Heart right ventricle (tissue), 16 donors: ENCODE measurements at regions of chr16 and their contacts with region 1.

Region 1: DNA sequence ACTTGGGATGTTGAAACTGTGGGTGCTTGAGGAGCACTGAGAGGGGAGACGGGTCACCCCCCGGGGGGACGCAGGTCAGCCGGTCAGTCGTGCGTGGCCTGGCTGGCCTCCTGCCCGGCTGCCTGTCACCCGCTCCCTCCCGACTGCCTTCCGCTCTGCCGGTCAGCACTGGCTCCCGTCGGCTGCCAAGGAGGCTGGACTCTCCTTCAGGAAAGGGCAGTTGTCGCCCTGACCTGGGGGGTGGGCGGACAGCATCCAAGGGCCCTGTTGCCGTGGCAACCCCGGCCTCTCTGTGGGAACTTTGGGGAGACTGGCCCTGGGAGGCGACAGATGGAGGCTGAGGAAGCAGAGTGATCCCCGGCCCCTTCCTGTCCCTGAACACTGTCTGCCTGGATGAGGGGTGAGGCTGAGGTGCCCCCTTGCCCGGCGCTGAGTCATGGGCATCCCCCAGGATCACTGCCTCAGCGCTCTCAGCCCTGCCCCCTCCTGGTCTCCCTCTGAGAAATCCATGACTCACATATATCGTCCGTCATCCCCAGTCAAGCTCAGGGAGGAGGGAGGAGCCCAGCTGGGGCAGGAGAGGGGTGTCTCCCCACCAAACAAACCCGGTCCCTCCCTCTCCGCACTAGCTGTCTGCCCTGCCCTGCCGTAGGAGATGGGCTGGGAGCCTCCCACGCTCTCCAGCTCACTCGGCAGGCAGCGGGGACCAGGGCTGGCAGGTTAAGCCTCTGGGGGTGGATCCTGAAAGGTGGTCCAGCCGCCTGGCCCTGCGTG is at the start of gene ADGRG1:
- DNase-seq: peak; percentile 74 to 84
- ATAC-seq: peak; percentile 70 to 88 (median 82)
- H3K4me3 ChIP-seq: peak within 1 kb of the TSS; percentile 39 to 63 (median 52)
- H3K27ac ChIP-seq: peak within 1 kb of the TSS; percentile 72 to 92 (median 84)
- H3K4me1 ChIP-seq: peaks cover 16 to 61% (median 42%) of the 10 kb centered on the region in 9 donors
- H3K27me3 ChIP-seq: peaks cover 0 to 27% (median 0%) of the 10 kb centered on the region in 7 donors
- CTCF ChIP-seq: peak in 5 of 9 donors; percentile 14 to 45 (median 17)
- total RNA-seq, gene ADGRG1: 11.1 to 46.3 (median 18.5) TPM

Region 2: DNA sequence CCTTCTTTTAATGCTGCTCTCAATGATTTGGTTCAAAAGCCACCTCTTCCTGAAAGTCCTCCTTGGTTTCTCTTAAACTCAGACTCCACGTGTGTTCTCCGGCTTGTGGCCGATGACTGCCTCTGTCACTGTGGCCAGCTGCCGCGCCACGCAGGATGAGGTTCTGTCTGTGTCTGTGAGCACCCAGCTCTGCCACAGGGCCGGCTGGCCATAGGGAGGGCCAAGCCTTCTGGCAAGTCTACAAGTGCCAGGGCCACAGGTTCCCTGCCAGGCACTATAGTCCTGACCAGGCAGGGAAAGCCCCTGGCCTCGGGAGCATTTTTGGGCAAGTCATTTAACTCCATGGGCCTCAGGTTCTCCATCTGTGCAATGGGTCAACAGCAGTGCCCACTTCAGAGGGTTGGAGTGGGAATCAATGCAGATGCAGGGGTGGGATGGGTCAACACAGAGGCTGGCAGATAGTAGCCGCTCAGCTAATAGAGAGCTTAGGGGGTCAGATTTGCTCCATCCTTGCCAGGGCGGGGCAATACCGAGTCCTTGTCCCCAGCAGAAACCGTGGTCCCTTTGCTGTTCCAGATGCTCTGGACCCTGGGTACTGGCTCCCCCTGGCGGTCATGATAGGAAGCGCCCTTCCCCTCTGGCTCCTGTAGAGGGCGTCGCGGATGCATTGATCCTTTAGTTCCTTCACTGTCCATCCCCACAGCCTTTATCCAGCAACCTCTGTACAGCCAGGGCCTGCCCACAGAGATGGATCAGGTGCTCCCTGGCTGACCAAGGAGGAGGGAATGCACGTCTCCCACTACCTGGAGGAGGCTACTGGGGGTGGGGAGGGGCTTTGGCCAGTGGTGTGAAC is 20.6 kb after region 1 on chr16:
- intact Hi-C with region 1: loop called in 3 of 10 experiments (anchors 1 to 2 kb)
- DNase-seq: peak; percentile 73 to 79
- ATAC-seq: peak; percentile 32 to 50 (median 45)
- H3K4me3 ChIP-seq: peak overlapping the region in 1 of 10 donors; percentile 4
- H3K27ac ChIP-seq: peak overlapping the region; percentile 78 to 93 (median 86)
- H3K4me1 ChIP-seq: peaks cover 9 to 58% (median 39%) of the 10 kb centered on the region in 9 donors
- H3K27me3 ChIP-seq: peaks cover 0 to 14% (median 0%) of the 10 kb centered on the region in 7 donors
- CTCF ChIP-seq: peak; percentile 99 to 100 (median 100)

Region 3: GRCh38 chr16:57882792-57883191 is 254.6 kb after region 1 on chr16:
- intact Hi-C with region 1: no loop called
- DNase-seq: no peak
- ATAC-seq: no peak
- H3K4me3 ChIP-seq: no peak overlapping the region
- H3K27ac ChIP-seq: no peak overlapping the region
- H3K4me1 ChIP-seq: peaks cover 0 to 8% (median 3%) of the 10 kb centered on the region in 9 donors
- H3K27me3 ChIP-seq: peaks cover 15 to 65% (median 52%) of the 10 kb centered on the region in 7 donors
- CTCF ChIP-seq: no peak